Dendritic cell treated with granulocyte-macrophage colony-stimulating factor and Interleukin-4, amounts not matched to agents 40 ng/mL and 50 ng/mL, for 4 days (primary cell): ENCODE measurements at regions of chrX and their contacts with region 1.

Region 1: DNA sequence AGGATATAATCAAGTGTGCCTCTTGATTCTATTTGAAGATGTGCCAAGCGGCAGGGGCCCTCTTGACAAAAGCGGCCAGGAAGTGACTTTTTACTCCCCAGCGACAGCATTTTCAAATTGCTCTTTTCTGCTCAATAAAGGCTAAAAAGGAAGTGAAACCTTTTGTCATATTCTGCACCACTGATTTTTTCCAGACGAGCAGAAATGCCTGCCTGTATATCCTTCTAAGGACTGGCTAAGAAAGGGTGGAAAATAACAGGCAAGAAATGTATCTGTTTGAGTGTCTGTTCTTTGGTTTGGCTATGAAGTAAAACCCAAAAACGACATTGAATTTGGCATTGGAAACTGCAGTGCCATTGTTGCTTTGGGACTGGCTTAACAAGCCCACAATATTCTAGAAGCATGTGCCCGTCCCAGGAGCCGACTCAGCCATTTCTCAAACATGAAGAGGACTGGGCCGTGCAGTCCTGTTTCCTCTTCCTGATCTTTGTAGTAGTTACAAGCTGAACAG is 25.4 kb downstream of the TMSB4X start:
- H3K4me3 Mint-ChIP-seq: no peak overlapping the region
- H3K27ac Mint-ChIP-seq: peak overlapping the region; percentile 85
- H3K4me1 Mint-ChIP-seq: peaks cover 30% of the 10 kb centered on the region
- H3K27me3 Mint-ChIP-seq: no peaks in the 10 kb centered on the region

Region 2: DNA sequence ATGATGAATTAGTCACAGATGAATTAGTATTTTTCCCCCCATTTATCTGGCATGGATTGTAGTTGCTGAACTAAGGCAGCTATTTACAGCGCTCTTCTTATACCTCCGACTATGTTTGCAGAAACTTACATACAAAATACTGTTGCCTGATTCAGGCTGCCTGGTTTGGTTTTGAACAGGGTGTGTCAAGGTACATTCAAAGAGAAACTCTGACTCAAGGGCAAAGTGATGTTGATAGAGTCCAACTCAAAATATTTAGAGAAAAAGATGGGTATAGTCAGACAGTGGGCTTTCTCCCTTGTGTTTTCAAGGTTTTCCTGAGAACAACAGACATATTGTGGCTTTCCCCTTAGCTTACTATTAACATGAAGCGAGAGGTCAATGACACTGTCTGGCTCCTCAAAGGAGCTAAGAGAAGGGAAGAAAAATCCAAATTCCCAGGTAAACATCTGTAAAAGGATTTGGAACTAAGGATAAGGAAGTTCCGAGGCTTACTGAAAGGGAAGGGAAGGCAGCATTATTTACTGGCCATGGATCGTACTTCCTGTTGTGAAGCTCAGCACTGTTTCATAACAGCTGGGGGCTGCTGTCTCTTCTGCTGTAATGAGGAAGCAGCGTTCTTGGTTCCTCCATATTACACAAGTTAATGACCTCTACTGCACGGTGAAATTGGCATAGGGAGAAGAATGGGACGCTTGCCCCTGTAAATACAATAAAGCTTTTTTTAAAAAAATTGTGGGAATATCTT is 13.2 kb after region 1 on chrX:
- intact Hi-C with region 1: loop called (anchors 2 kb)
- H3K4me3 Mint-ChIP-seq: no peak overlapping the region
- H3K27ac Mint-ChIP-seq: peak overlapping the region; percentile 74
- H3K4me1 Mint-ChIP-seq: peaks cover 47% of the 10 kb centered on the region
- H3K27me3 Mint-ChIP-seq: no peaks in the 10 kb centered on the region

Region 3: GRCh38 chrX:13064599-13065143 is 64.3 kb after region 1 on chrX:
- intact Hi-C with region 1: no loop called
- H3K4me3 Mint-ChIP-seq: no peak overlapping the region
- H3K27ac Mint-ChIP-seq: no peak overlapping the region
- H3K4me1 Mint-ChIP-seq: peaks cover 7% of the 10 kb centered on the region
- H3K27me3 Mint-ChIP-seq: no peaks in the 10 kb centered on the region